CD8-positive, alpha-beta T cell (primary cell): ENCODE measurements at regions of chr1 and their contacts with region 1.

Region 1: DNA sequence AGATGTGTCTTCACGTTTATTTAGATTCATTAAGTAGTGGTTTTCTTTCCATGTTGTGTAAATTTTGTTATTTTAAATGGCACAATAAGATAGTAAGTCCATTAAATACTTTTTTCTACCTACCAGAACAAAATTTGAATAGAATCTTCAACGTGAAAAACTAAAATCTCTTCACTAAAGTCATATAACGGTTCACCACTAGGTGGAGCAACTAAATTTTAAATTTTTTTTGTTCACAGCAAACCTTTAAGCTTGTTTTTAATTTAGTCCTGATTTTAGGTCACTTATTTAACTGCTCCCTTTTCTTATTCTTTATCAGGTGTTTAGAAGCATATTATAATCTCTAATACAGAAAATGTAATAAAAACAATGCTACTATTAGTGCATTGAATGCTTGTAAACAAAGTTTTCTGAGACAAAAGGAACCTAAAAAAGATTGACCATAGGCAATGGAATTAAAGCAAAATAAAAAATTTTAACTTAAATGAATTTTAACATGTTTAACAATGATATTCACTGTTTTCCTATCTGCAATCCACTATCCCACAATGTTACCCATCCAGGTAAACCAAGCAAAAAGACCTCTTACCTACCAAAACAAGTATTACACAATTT is 28.3 kb upstream of the PKN2 start:
- DNase-seq: peak in 2 of 9 experiments; percentile 44 to 59
- ATAC-seq: no peak
- H3K4me3 ChIP-seq: no peak overlapping the region
- H3K4me3 Mint-ChIP-seq: no peak overlapping the region
- H3K27ac ChIP-seq: no peak overlapping the region
- H3K27ac Mint-ChIP-seq: no peak overlapping the region
- H3K4me1 ChIP-seq: peaks cover 8% of the 10 kb centered on the region
- H3K4me1 Mint-ChIP-seq: peaks cover 12% of the 10 kb centered on the region
- H3K27me3 ChIP-seq: peaks cover 0 to 2% of the 10 kb centered on the region in 2 experiments
- H3K27me3 Mint-ChIP-seq: no peaks in the 10 kb centered on the region
- CTCF ChIP-seq: peak; percentile 82

Region 2: DNA sequence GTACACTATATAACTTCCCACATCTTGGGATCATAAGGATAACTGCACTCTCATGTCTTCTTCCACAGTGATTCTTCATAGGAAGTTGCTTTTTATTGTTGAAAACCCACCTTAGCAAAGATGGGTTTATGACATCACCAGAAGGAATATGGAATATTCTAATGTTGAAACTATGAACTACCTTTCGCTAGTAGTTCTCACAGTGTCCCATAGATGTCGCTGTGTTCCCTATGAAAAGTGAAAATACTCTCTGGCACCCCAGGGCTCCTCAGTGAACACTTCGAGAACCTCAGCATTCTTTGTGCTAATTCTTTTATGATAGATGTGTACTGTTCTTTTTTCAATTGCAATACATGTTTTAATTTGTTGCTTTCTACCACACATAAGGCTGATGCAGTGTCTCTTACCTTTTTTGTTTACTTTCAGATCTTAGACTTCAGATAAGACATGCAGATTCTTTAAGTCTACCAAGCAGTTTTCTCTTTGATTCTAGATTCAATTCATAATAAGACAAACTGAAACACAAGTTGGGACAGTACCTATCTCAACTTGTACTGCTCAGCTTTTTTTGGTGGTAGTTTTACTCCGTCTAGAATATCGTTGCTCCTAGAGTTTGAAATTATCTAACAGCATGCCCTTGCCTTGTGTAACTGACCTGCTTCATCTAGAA is 144.7 kb after region 1 on chr1:
- CTCF ChIA-PET with region 1: interaction called, 6 read pairs
- POLR2A ChIA-PET with region 1: no interaction called
- intact Hi-C with region 1: loop called in 1 of 2 experiments (anchors 5 kb)
- DNase-seq: peak in 6 of 9 experiments; percentile 7 to 64 (median 30)
- ATAC-seq: peak; percentile 75
- H3K4me3 ChIP-seq: no peak overlapping the region
- H3K4me3 Mint-ChIP-seq: no peak overlapping the region
- H3K27ac ChIP-seq: no peak overlapping the region
- H3K27ac Mint-ChIP-seq: no peak overlapping the region
- H3K4me1 ChIP-seq: no peaks in the 10 kb centered on the region
- H3K4me1 Mint-ChIP-seq: peaks cover 10% of the 10 kb centered on the region
- H3K27me3 ChIP-seq: no peaks in the 10 kb centered on the region
- H3K27me3 Mint-ChIP-seq: no peaks in the 10 kb centered on the region
- CTCF ChIP-seq: peak; percentile 74